ENCODE measurements at regions of chr3 and their contacts with region 1.

Region 1: GRCh38 chr3:186783073-186783730 is at the start of gene EIF4A2:
- DNase-seq: peak; percentile 89
- H3K4me3 Mint-ChIP-seq: peak within 1 kb of the TSS; percentile 95
- H3K27ac Mint-ChIP-seq: peak within 1 kb of the TSS; percentile 94
- H3K4me1 Mint-ChIP-seq: peaks cover 41% of the 10 kb centered on the region
- H3K27me3 Mint-ChIP-seq: no peaks in the 10 kb centered on the region
- total RNA-seq, gene EIF4A2: 491 and 514 TPM in 2 replicates

Region 2: GRCh38 chr3:186640473-186640818 is 142.8 kb before region 1 on chr3:
- intact Hi-C with region 1: loop called (anchors 2 kb)
- DNase-seq: no peak
- H3K4me3 Mint-ChIP-seq: no peak overlapping the region
- H3K27ac Mint-ChIP-seq: no peak overlapping the region
- H3K4me1 Mint-ChIP-seq: peaks cover 45% of the 10 kb centered on the region
- H3K27me3 Mint-ChIP-seq: peaks cover 12% of the 10 kb centered on the region

Region 3: DNA sequence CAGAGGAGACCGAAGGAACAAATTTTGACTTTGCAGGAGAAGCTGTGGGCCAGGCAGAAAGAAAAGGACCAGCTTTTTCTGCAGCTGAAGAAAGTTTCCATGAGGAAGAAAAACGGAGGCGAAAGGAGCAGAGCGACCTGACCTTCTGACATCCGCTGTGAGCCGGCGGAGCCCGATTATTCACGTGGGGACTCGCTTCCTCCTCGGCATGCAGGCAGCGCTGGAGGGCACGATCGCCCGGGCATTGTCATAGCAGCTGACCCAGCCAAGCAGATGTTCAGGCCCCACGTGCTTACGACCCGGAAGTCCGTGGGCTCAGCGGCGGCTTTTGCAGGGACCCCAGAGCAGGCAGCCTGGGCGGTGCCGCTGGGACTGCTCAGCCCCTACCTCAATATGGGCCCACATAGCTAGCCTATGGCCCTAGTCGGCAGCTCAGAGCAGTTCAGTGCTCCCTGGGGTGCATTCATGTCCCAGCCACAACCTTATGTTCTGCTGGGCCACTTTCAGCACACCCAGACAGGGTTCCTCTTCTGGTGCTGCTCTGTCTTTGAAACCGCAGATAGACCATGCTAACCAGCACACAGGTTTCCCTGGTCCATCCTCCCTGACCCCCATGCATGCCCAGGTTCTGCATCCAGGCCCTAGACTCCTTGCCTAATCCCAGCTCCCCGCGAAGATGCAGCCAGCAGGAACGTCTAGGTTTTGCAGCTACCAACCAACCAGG is 10.3 kb before region 1 on chr3:
- intact Hi-C with region 1: loop called (anchors 1 kb)
- DNase-seq: peak; percentile 44
- H3K4me3 Mint-ChIP-seq: peak overlapping the region; percentile 86
- H3K27ac Mint-ChIP-seq: peak overlapping the region; percentile 92
- H3K4me1 Mint-ChIP-seq: peaks cover 20% of the 10 kb centered on the region
- H3K27me3 Mint-ChIP-seq: peaks cover 2% of the 10 kb centered on the region

Region 4: GRCh38 chr3:186806089-186807055 is 23.2 kb after region 1 on chr3 and contains the start of gene RFC4:
- intact Hi-C with region 1: loop called (anchors 1 kb)
- DNase-seq: peak; percentile 80
- H3K4me3 Mint-ChIP-seq: peak within 1 kb of the TSS; percentile 93
- H3K27ac Mint-ChIP-seq: peak within 1 kb of the TSS; percentile 85
- H3K4me1 Mint-ChIP-seq: peaks cover 31% of the 10 kb centered on the region
- H3K27me3 Mint-ChIP-seq: no peaks in the 10 kb centered on the region
- total RNA-seq, gene RFC4: 111 and 122 TPM in 2 replicates

Region 5: GRCh38 chr3:186826976-186827731 is 44.0 kb after region 1 on chr3:
- intact Hi-C with region 1: loop called (anchors 2 kb)
- DNase-seq: peak; percentile 87
- H3K4me3 Mint-ChIP-seq: peak overlapping the region; percentile 93
- H3K27ac Mint-ChIP-seq: peak overlapping the region; percentile 78
- H3K4me1 Mint-ChIP-seq: peaks cover 20% of the 10 kb centered on the region
- H3K27me3 Mint-ChIP-seq: peaks cover 48% of the 10 kb centered on the region

Region 6: DNA sequence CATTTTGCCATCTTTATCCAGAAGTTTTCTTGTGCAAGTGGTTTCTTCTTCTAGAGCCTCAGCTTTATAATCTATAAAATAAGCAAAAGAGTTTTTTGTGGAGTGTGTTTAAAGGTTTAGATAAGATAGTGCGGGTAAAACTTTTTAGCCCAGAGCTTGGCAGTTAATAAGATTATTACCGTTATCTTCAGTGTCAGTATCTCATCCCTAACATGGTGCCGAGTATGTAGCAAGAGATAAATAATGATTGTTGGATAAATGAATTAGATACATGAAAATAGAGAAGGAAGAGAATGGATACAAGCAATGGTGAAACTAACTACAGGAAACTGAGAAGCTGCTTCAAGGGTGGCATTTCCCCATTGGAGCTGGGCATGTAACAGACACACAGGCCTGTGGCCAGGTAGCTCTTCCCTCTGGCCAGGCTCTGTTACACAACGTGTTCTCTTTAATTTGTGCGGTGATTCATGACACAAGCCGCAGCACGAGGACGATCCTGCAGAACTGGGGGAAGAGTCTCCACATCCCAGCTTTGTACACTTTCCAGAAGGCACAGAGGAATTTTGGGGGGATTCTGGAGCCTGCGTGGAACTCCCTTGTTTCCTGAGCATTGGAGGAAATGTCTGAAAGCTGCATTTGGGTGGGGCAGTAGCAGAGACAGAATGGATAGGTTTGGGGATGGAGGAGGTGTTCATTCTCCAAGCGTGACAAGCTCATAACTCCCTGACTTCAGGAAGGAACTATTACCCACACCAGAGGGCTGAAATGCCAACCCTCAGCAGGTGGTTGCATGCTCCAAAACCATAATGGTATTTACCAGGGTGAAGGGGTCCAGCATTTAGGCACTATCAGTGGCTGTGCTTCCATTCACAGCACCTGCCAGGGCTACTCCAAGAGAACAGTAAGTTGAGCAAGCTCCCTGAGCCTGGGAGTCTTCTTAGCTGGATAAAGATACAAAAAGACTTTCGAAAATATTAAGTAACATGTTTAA is 132.9 kb after region 1 on chr3:
- intact Hi-C with region 1: no loop called
- DNase-seq: no peak
- H3K4me3 Mint-ChIP-seq: no peak overlapping the region
- H3K27ac Mint-ChIP-seq: no peak overlapping the region
- H3K4me1 Mint-ChIP-seq: peaks cover 59% of the 10 kb centered on the region
- H3K27me3 Mint-ChIP-seq: no peaks in the 10 kb centered on the region

Measured in activated T-helper 1 cell treated with anti-CD3 and anti-CD28 coated beads, Interleukin-12 subunit alpha, Interleukin-12 subunit beta, Interleukin-2, Interleukin-4 antibody, amounts not matched to agents 30 ng/mL and 10 ng/mL and 1 ng/mL, durations not matched to agents 14 hours and 24 hours and 36 hours (primary cell).